H1 (cell line): ENCODE measurements at regions of chr19 and their contacts with region 1.

Region 1: DNA sequence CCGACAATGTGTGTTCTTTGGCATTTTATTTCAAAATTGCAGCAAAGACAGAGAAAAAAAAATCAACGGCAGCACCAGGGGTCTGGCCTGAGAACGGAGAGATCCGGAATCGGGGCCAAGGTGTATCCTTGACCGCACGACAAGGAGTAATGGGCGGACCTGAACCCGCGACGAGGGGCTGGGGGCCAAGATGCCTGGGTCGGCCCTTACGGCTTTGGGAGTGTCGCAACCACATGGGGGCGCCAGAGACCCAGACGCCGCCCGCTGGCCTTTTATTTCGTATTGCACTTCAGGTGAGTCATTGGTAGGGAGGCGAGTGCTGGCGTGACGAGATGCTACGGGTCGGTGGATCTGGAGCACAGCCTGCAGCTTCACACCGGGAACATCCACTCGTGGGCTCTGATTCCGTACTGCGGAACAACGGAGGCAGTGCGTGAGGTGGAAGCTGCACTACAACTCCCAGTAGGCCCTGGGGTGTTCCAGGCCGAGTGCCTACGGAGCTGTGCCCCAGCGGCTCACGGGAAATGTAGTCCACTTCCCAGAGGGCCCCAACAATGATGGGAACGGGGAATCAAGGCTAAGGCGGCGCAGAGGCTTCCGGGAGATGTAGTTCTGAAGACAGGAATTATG is 15.7 kb downstream of the BCAT2 start:
- DNase-seq: peak; percentile 82 to 92
- H3K4me3 ChIP-seq: peak overlapping the region; percentile 39 to 84 (median 70)
- H3K27ac ChIP-seq: peak overlapping the region; percentile 65; the same call in 1 of the 2 replicates
- H3K4me1 ChIP-seq: peaks cover 0 to 16% (median 10%) of the 10 kb centered on the region in 4 experiments; a peak in 6 of 7 replicates
- H3K27me3 ChIP-seq: no peaks in the 10 kb centered on the region
- CTCF ChIP-seq: peak; percentile 84 to 90 (median 87)
- EP300 ChIP-seq: no peak
- POLR2A ChIP-seq: no peak
- RAD21 ChIP-seq: peak; percentile 75 to 79

Region 2: DNA sequence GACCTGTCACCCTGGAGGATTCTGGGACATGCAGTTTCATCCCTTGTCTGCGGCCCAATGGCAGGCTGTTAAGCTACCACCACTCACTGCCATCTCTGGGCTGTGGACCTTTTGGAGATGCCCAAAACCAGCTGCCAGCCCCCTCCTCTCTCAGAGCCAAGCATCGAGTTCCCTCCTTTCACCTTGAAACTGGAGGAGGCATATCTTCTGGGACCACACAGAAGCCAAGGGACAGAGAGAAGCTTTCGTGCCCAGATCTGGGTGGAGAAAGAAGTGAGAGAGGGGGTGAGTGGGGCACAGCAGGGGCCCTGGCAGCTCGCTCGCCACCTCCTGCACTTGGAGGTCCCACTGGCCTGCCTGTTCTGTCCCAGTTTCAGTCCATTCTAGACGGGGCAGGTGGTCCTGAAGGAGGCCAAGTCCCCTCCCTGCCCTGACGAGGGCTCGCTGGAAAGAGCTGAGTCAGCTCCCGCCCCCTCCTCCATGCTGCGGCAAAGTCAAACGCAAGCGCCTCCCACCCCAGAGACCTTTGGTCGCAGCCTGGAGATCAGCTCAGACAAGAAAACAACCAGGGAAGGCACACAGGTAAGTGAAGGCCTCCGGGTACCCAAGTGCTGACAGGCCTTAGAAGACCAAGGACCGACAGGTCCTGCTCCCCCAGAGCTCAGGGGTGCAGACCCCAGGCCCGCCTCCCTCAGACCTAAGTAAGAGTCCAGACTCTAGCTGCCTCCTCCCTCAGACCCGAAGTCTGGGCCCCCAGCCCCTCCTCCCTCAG is 11.8 kb after region 1 on chr19:
- CTCF ChIA-PET with region 1: interaction called, 285 read pairs
- POLR2A ChIA-PET with region 1: interaction called, 36 read pairs
- DNase-seq: peak in 1 of 2 experiments; percentile 55
- H3K4me3 ChIP-seq: peak overlapping the region in 1 of 4 experiments; percentile 3; a peak in 1 of 8 replicates
- H3K27ac ChIP-seq: peak overlapping the region; percentile 36; the same call in 1 of the 2 replicates
- H3K4me1 ChIP-seq: peaks cover 0 to 19% (median 13%) of the 10 kb centered on the region in 4 experiments; a peak in 6 of 7 replicates
- H3K27me3 ChIP-seq: peaks cover 0 to 11% (median 0%) of the 10 kb centered on the region in 4 experiments; a peak in 3 of 7 replicates
- CTCF ChIP-seq: no peak
- EP300 ChIP-seq: no peak
- POLR2A ChIP-seq: no peak
- RAD21 ChIP-seq: no peak

Region 3: GRCh38 chr19:48819366-48819816 is 24.2 kb after region 1 on chr19:
- CTCF ChIA-PET with region 1: interaction called, 285 read pairs
- POLR2A ChIA-PET with region 1: interaction called, 4 read pairs
- DNase-seq: no peak
- H3K4me3 ChIP-seq: no peak overlapping the region
- H3K27ac ChIP-seq: no peak overlapping the region
- H3K4me1 ChIP-seq: no peaks in the 10 kb centered on the region; a peak in 1 of 7 replicates
- H3K27me3 ChIP-seq: no peaks in the 10 kb centered on the region
- CTCF ChIP-seq: no peak
- EP300 ChIP-seq: no peak
- POLR2A ChIP-seq: no peak
- RAD21 ChIP-seq: no peak

Region 4: DNA sequence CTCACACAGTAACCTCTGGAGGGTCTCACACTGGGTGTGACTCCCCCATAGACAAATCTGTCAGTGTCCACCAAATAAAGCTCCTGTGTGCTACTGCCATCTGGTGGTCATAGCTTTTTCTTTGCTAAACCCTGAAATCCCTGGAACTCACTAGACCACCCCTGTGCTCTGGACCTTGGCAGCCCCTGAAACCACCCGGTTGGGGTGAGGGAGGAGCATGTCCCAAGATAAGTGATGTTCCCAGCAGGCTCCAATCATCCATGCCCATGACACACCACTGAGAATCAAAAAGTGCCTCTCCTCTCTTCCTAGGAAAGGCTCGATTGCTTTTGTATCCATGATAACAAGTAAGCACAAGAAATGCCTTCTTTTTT is 47.6 kb after region 1 on chr19:
- CTCF ChIA-PET with region 1: interaction called, 231 read pairs
- POLR2A ChIA-PET with region 1: interaction called, 4 read pairs
- DNase-seq: peak in 1 of 2 experiments; percentile 75
- H3K4me3 ChIP-seq: no peak overlapping the region
- H3K27ac ChIP-seq: no peak overlapping the region
- H3K4me1 ChIP-seq: no peaks in the 10 kb centered on the region; a peak in 1 of 7 replicates
- H3K27me3 ChIP-seq: no peaks in the 10 kb centered on the region
- CTCF ChIP-seq: peak; percentile 27 to 80 (median 76)
- EP300 ChIP-seq: no peak
- POLR2A ChIP-seq: no peak
- RAD21 ChIP-seq: peak; percentile 71 to 81

Region 5: GRCh38 chr19:48887861-48888612 is 92.9 kb after region 1 on chr19:
- CTCF ChIA-PET with region 1: no interaction called
- POLR2A ChIA-PET with region 1: no interaction called
- DNase-seq: no peak
- H3K4me3 ChIP-seq: no peak overlapping the region
- H3K27ac ChIP-seq: no peak overlapping the region
- H3K4me1 ChIP-seq: peaks cover 0 to 3% (median 0%) of the 10 kb centered on the region in 4 experiments; a peak in 1 of 7 replicates
- H3K27me3 ChIP-seq: no peaks in the 10 kb centered on the region
- CTCF ChIP-seq: no peak
- EP300 ChIP-seq: no peak
- POLR2A ChIP-seq: no peak
- RAD21 ChIP-seq: no peak

Region 6: DNA sequence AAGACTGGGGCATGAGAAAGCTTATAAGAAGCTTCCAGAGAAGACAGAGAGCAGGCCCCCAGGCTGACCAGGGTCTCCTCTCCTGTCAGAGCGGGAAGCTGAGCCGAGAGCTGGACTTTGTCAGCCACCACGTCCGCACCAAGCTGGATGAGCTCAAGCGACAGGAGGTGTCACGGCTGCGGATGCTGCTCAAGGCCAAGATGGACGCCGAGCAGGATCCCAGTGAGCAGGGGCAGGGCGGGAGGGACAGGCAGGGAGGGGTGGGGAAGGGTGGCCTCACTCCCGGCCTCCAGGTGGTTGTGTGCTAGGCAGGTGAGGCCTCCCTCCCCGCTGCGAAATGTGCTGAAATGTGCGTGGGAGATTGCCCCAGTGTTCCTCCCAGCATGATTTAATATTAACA is 110.5 kb after region 1 on chr19:
- CTCF ChIA-PET with region 1: no interaction called
- POLR2A ChIA-PET with region 1: no interaction called
- DNase-seq: no peak
- H3K4me3 ChIP-seq: no peak overlapping the region
- H3K27ac ChIP-seq: no peak overlapping the region
- H3K4me1 ChIP-seq: no peaks in the 10 kb centered on the region; a peak in 3 of 7 replicates
- H3K27me3 ChIP-seq: no peaks in the 10 kb centered on the region
- CTCF ChIP-seq: no peak
- EP300 ChIP-seq: no peak
- POLR2A ChIP-seq: no peak
- RAD21 ChIP-seq: no peak